ENCODE measurements at regions of chr7 and their contacts with region 1.

Region 1: DNA sequence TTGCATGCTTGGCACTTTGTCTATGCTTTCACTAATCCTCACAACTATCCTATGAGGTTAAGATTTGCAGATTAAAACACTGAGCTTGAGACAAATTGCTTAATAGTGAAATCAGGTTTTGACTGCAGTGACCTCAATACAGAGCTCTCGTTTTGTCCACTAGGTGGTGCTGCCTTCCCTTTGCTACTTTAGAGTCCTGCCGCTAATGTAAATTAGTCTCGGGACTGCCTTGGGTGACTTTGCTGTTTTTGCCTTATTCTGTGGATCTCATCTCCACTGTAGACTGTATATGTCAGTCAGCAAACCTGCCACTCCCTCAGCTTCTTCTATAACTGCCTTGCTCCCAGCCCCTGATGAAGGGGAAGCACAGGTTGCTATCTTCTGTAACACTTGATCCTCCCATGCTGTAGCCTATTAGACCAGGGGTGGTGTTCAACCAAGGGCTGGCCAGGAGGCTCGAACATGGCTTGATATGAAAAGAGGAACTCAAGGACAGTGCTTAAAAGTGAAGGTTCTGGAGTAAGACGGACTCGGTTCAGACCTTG is 26.0 kb downstream of the ASB4 start:
- DNase-seq: peak in 1 of 2 experiments; percentile 73
- H3K4me3 ChIP-seq: no peak overlapping the region
- H3K27ac ChIP-seq: no peak overlapping the region
- H3K4me1 ChIP-seq: peaks cover 0 to 4% (median 0%) of the 10 kb centered on the region in 4 experiments; a peak in 1 of 7 replicates
- H3K27me3 ChIP-seq: no peaks in the 10 kb centered on the region
- CTCF ChIP-seq: peak; percentile 8 to 87 (median 74)
- EP300 ChIP-seq: no peak
- POLR2A ChIP-seq: no peak
- RAD21 ChIP-seq: peak; percentile 74 to 77

Region 2: DNA sequence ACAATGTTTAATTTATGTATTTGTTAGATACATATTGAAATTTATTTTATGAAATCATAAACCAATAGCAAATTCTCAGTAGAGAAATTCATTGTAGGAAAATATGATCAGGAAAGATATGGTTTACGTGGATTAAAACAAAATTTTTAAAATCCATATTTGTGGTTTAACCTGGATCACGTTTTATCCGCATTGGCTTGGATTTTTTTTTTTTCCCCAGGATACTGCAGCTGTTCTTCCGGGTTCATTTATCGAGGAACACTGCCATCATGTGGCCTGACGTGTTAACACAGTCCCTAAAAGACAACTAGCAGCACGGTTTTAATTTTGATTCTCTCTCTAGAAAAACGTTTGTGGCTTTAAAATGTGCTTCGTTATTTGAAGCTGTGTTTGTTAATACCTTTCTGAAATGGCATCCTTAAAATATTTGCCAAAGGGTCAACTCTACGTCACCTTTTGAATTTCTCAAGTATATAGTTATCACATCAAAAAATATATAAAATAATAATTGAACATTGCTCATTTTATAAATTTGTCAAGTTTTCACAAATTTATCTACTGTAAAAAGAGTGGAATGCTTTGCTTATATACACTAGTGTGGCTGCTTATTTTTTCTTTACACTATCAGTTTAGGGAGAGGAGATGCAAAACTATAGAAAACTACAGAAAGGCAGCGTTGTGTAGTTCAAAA is 34.7 kb before region 1 on chr7:
- CTCF ChIA-PET with region 1: interaction called, 16 read pairs
- POLR2A ChIA-PET with region 1: no interaction called
- DNase-seq: no peak
- H3K4me3 ChIP-seq: no peak overlapping the region
- H3K27ac ChIP-seq: no peak overlapping the region
- H3K4me1 ChIP-seq: no peaks in the 10 kb centered on the region
- H3K27me3 ChIP-seq: no peaks in the 10 kb centered on the region
- CTCF ChIP-seq: peak in 2 of 3 experiments; percentile 70 to 71; a peak in 3 of 4 replicates
- EP300 ChIP-seq: no peak
- POLR2A ChIP-seq: no peak
- RAD21 ChIP-seq: peak; percentile 92 to 94

Region 3: DNA sequence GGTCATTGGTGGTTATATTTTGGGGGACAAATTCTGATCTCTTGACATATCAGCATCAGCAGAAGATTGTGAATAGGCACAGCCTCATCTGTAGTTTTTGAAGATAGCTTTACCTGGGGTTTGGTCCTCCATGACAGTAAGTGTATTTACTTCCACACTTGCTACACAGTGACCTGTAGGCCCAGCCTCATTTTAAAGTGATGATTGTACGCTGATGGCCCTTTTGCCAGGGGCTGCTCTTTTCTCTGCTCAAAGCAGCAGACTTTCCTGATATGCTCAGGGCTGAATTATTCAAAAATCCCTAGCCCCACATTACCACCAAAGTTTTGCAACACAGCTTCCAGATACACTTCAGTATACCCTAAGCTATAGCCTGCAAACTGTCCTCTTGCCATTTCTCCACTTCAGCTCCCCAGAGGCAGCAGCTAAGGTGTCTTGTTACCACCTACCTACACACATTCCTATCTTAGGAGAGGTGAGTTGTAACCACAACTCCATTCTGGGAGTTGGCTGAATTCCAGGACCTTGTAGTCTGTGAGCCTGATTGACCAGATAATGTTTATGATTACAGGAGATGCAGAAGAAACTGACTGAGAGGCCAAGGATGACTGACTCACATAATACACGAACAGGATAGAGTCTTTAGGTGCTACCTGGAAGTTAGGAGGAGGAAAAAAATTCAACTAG is 20.0 kb before region 1 on chr7:
- CTCF ChIA-PET with region 1: interaction called, 29 read pairs
- POLR2A ChIA-PET with region 1: interaction called, 3 read pairs
- DNase-seq: no peak
- H3K4me3 ChIP-seq: no peak overlapping the region
- H3K27ac ChIP-seq: no peak overlapping the region
- H3K4me1 ChIP-seq: peaks cover 4 to 8% (median 6%) of the 10 kb centered on the region in 4 experiments; a peak in 4 of 7 replicates
- H3K27me3 ChIP-seq: no peaks in the 10 kb centered on the region
- CTCF ChIP-seq: no peak
- EP300 ChIP-seq: no peak
- POLR2A ChIP-seq: no peak
- RAD21 ChIP-seq: no peak

Region 4: DNA sequence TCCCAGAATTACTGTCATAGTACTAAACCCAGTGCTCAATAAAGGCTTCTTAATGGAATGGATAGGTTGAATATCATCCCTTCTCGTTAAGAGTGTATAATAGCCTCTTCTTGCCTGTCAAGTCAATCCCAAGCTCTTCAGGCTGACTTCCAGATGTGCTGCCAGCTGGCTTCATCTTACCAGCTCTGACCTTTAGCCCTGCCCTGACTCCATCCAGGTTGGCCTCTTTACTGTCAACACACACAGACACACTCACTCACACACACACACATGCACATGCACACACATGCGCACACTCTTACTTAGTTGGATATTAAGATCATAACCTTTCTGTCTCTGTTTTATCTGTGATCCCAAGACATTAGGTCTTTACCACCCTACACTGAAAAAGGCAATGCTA is 23.0 kb after region 1 on chr7:
- CTCF ChIA-PET with region 1: interaction called, 29 read pairs
- POLR2A ChIA-PET with region 1: no interaction called
- DNase-seq: no peak
- H3K4me3 ChIP-seq: no peak overlapping the region
- H3K27ac ChIP-seq: no peak overlapping the region
- H3K4me1 ChIP-seq: no peaks in the 10 kb centered on the region
- H3K27me3 ChIP-seq: peaks cover 0 to 1% (median 0%) of the 10 kb centered on the region in 4 experiments; a peak in 1 of 7 replicates
- CTCF ChIP-seq: no peak
- EP300 ChIP-seq: no peak
- POLR2A ChIP-seq: no peak
- RAD21 ChIP-seq: no peak

Region 5: GRCh38 chr7:95684037-95684436 is 172.2 kb after region 1 on chr7:
- CTCF ChIA-PET with region 1: interaction called, 256 read pairs
- POLR2A ChIA-PET with region 1: interaction called, 3 read pairs
- DNase-seq: no peak
- H3K4me3 ChIP-seq: no peak overlapping the region
- H3K27ac ChIP-seq: no peak overlapping the region
- H3K4me1 ChIP-seq: no peaks in the 10 kb centered on the region
- H3K27me3 ChIP-seq: no peaks in the 10 kb centered on the region
- CTCF ChIP-seq: peak in 1 of 3 experiments; percentile 31; a peak in 1 of 4 replicates
- EP300 ChIP-seq: no peak
- POLR2A ChIP-seq: no peak
- RAD21 ChIP-seq: peak; percentile 52 to 54

Measured in H1 (cell line).